ENCODE measurements at regions of chr11 and their contacts with region 1.

Region 1: GRCh38 chr11:1694064-1694845 is 2.7 kb upstream of the KRTAP5-6 start:
- DNase-seq: peak; percentile 93
- ATAC-seq: peak; percentile 99

Region 2: DNA sequence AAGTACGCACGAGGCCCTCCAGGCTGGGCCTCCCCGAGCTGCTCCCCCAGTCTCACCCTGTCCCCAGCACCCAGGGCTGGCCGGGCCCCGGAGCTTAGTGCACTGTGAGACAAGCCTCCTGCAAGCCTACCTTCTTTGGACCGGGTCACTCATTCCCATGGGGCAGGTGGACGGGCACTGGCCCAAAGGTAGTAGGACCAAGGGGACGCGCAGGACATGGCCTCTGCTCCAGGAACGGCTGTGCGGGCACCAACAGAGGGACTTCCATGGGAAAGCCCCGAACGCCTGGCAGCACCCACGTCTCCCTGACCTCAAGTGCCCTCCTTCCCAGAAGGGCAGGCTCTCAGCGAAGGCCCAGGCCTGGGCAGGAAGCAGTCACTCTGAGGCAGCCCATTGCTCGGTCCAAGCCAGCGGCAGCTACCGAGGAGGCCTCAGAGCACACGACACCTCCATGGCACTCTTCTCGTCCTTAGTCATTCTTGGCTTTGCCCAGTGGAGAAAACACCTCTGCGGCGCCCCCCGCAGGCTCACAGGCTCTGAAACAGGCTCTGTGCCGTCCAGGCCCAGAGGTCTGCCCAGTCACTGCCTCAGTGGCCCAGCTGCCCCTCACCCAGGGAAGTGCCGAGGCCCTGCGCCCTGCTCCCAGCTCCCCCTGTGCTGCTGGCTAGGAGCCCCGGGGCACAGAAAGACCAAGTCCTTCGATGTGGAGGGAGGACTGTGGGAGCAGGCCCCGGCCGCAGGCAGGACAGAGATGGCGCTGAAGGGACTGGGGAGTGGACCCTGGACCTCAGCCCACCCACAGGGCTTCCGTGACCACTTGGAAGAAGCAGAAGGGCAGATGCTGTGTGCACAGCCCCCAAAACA is 211.4 kb before region 1 on chr11:
- intact Hi-C with region 1: no loop called
- DNase-seq: peak; percentile 46
- ATAC-seq: peak; percentile 35

Region 3: DNA sequence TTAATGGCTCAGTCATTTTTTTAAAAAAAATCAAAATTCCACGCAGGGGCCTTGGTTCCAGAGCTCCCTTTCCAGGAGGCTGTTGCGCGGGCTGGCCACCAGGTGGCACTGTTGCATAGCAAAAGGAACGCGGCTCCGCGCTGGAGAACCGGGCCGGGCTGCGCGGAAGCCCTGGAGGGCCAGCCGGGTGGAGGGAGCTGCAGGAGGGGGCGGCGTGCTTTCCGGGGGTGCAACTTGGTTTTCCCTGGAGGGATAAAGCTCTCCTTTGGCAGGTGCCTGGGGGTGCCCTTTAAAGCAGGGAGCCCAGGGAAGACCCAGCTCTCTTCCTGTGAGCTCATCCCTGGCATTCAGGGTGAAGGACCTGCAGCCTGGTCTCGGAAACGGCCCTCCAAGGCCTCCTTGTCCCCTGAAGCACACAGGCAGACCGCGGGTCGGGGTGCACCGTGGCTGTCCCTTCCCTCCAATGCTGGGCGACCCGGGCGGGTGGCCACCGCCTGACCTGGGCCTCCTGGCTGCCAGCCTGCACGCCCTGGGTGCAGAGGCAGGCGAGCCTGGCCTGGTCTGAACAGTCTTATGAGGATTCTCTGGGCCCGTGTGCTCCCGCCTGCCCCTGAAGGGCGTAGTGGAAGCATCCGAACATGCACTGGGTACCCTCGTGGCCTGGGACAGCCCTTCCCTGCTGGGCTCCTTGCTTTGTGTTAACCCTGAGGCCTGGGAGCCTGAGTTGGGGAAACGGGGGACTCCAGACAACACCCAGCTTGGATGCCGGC is 41.3 kb before region 1 on chr11:
- intact Hi-C with region 1: loop called (anchors 5 kb)
- DNase-seq: peak; percentile 85
- ATAC-seq: peak; percentile 88

Region 4: DNA sequence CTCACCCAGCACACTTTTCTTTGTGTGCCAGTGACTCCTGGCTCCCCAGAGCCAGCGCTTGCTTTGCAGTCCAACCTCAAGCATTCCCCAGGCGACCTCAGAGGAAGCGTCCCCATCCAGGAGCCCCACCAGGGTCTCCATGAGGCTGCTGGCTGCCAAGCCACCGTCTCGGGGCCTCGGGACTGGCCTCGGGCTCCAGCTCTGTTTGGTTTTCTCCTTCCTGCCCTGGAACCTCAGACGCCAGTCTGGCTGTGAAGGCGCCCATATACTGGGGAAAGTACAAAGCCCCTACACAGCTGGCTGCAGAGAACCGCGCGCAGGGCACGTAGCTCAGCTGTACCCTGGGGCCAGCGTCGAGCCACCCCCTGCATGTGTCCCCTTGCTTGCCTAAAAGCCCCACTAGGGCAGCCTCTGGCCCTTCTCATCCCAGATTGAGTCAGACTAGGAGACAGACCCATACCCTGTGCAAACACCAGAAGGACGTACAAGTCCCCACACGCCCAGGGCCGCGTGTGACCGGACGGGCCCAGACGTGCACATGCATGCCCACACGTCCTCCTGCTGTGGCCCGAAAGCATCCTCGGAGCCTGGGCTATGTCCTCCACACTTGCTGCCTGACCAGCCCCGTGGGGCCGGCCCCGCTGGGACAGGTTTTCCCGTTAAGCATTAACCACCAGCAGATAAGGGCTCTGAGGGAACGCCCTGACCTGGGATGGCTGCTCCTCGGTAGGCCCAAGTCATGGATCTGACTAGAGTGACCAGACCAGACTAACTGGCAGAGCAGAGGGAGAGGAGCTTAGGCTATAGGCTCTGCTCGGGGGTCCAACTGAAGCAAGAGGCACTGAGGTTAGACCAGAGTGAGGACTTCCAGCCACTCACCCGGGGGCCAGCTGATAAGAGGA is 136.3 kb after region 1 on chr11:
- intact Hi-C with region 1: loop called (anchors 2 kb)
- DNase-seq: no peak
- ATAC-seq: no peak

Region 5: DNA sequence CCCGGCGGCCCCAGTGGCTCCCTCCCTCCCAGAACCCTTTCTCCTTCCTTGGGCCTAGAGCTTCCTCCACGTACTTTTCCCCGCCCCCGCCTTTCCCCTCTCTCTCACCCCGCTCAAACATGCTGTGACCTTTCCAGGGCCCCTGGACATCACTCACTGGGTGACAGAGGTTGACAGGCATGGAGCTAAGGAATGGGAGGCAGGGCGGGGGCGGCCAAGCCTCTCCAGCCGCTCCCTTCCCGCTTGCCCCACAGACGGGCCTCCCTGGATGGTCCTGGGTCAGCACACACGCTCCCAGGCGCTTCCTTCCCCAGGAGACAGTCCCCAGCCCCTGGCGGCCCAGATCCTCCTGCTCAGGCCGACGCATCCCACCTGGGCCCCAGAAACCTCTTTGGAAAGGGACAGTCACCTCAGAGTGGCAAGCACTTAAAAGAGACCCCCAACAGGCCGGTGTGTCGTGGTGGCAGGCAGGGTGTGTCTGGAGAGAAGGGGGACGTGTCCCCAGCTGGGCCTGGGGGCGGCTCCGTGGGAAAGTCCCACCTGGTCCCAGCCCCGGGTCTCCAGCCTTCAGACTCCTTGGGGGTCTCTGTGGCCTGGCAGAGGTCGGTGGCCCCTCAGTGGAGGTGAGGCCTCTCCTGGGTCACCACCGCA is 294.5 kb after region 1 on chr11:
- intact Hi-C with region 1: no loop called
- DNase-seq: peak; percentile 17
- ATAC-seq: no peak

Region 6: DNA sequence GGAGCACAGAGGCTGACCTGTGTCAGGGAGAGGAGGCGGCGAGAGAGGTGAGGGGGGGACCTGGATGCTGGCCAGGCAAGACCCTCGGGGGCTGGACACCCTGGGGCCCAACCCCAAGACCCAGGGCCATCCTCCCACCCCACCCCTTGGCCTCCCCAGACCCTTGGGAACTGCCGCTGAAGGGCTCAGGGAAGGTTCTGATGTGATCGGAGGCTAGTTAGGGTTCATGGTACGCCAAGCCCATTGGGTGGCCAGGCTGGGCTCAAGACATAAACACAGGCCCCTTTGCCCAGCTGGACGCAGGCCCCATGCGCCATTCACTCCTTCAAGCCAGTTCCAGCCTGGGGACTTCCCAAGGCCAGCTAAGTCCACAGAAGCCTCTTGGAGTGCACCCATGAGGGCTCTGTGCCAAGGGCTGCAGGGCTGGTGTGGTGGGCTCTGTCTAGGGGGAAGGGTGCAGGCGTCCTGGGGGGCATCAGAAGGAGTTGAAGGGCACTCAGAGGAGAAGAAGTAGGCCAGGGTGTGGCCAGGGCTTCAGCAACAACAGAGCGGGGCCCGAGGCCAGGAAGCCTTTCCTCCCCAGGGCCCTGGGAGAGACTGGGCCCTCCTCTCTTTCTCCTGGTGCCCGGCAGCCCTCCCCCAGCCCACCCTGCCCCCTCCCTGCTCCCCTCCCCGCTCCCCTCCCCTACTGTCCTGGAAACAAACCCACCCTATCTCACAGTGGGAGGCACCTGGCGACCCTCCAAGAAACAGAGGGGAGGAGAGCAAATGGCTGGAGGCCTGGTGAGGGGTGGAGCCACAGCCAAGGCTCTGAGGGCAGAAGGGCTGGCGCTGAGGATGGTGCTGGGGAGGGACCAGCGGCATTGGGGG is 620.5 kb after region 1 on chr11:
- intact Hi-C with region 1: no loop called
- DNase-seq: peak; percentile 94
- ATAC-seq: peak; percentile 87

Measured in Right ventricle myocardium superior (tissue), 1 donor.